ENCODE measurements at regions of chr9 and their contacts with region 1.

Region 1: DNA sequence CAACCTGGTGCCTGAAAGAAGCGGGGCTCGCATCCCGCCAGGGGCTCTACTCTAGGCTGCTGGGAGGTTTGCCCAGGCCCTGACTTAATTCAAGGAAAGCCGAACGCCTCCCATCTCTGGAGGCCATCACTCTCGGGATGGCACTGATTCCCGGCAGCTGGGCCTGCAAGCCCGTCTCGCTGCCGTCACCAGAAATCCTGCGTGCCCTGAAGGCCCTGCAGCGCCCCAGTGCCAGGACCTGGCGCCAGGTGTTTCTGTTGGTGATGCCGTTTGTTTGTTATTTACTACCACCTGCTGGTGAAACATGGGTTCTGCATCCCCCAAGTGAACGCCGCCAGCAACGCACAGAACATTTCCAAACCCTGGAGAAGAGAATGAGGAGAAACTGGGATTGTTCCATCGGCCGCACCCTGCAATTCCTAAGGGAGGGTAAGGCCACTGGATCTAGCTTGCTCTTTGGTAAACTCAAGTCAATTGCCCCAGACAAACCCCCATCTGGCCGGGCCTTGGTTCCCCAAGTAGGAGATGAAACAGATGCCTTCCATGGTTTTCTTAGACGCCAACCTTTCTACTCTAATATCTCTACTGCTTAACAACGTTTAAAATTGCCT is 77.9 kb downstream of the AK8 start:
- DNase-seq: peak; percentile 77 to 96 (median 91)
- H3K4me3 ChIP-seq: no peak overlapping the region
- H3K27ac ChIP-seq: peak overlapping the region in 1 of 5 donors; percentile 38
- H3K4me1 ChIP-seq: peaks cover 4 to 21% of the 10 kb centered on the region in 2 donors
- H3K27me3 ChIP-seq: no peaks in the 10 kb centered on the region
- CTCF ChIP-seq: peak; percentile 85 to 94 (median 90)
- POLR2A ChIP-seq: no peak

Region 2: DNA sequence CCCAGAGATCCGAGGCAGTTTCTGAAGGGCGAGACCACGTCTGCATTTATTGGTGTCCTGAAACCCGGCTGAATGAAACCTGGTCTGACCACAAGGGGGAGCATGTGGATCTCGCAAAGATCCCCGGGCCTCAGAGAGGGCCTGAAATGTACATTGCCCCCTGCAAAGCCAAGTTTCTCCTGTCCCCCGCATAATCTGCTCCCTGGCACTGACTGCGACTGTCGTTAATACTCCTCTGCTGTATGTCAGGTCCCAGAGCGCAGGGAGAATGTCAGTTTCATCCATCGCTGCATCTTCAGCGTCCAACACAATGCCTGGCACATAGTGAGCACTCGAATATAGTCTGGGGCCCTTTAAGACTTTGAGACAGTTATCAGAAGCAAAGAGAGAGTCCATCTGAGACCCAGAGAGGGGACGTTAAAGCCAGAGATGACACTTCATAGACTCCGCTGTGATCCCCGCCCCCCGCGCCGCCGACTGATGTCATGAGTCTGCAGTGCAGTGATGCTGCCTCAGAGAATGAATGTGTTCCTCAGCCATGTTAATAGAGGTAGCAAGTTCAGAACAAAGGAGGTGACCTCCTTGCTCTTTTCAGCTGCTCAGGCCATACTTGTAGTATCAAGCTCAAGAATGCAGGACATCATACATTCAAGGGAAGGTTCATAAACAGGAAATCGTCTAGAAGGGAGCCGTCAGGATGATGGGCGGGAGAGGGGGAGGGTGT is 292.2 kb before region 1 on chr9:
- intact Hi-C with region 1: loop called (anchors 5 to 10 kb)
- DNase-seq: peak; percentile 57 to 88 (median 76)
- H3K4me3 ChIP-seq: no peak overlapping the region
- H3K27ac ChIP-seq: no peak overlapping the region
- H3K4me1 ChIP-seq: no peaks in the 10 kb centered on the region
- H3K27me3 ChIP-seq: peaks cover 14% of the 10 kb centered on the region
- CTCF ChIP-seq: peak; percentile 72 to 85 (median 80)
- POLR2A ChIP-seq: no peak

Region 3: GRCh38 chr9:132575005-132575609 is 225.0 kb before region 1 on chr9:
- intact Hi-C with region 1: loop called in 1 of 2 experiments (anchors 5 kb)
- DNase-seq: peak; percentile 72 to 87 (median 83)
- H3K4me3 ChIP-seq: no peak overlapping the region
- H3K27ac ChIP-seq: no peak overlapping the region
- H3K4me1 ChIP-seq: no peaks in the 10 kb centered on the region
- H3K27me3 ChIP-seq: peaks cover 37% of the 10 kb centered on the region
- CTCF ChIP-seq: peak; percentile 67 to 90 (median 86)
- POLR2A ChIP-seq: no peak

Region 4: GRCh38 chr9:132669698-132670456 is 130.3 kb before region 1 on chr9 and contains the start of gene DDX31:
- intact Hi-C with region 1: loop called in 1 of 2 experiments (anchors 5 kb)
- DNase-seq: peak; percentile 86 to 93 (median 89)
- H3K4me3 ChIP-seq: peak within 1 kb of the TSS; percentile 71 to 88 (median 82)
- H3K27ac ChIP-seq: peak within 1 kb of the TSS; percentile 89 to 98 (median 93)
- H3K4me1 ChIP-seq: peaks cover 16 to 47% of the 10 kb centered on the region in 2 donors
- H3K27me3 ChIP-seq: no peaks in the 10 kb centered on the region
- CTCF ChIP-seq: peak in 2 of 6 experiments; percentile 0 to 14
- POLR2A ChIP-seq: peak; percentile 29 to 63
- total RNA-seq, gene DDX31: 7.4 to 12.3 (median 9.6) TPM